Heart right ventricle (tissue), 16 donors: ENCODE measurements at regions of chr4 and their contacts with region 1.

Region 1: GRCh38 chr4:139279760-139280620 is at the start of gene MGARP:
- DNase-seq: peak in 1 of 2 donors; percentile 29
- ATAC-seq: peak; percentile 50 to 85 (median 76)
- H3K4me3 ChIP-seq: peak within 1 kb of the TSS; percentile 29 to 62 (median 57)
- H3K27ac ChIP-seq: peak within 1 kb of the TSS in 3 of 10 donors; percentile 6 to 18 (median 15)
- H3K4me1 ChIP-seq: peaks cover 0 to 21% (median 14%) of the 10 kb centered on the region in 9 donors
- H3K27me3 ChIP-seq: peaks cover 0 to 62% (median 25%) of the 10 kb centered on the region in 7 donors
- CTCF ChIP-seq: no peak
- total RNA-seq, gene MGARP: 0.36 to 2.3 (median 1.1) TPM in 9 of 10 donors, not detected in the other

Region 2: GRCh38 chr4:139108567-139109128 is 171.3 kb before region 1 on chr4:
- intact Hi-C with region 1: loop called in 2 of 10 experiments (anchors 10 kb)
- DNase-seq: no peak
- ATAC-seq: no peak
- H3K4me3 ChIP-seq: no peak overlapping the region
- H3K27ac ChIP-seq: no peak overlapping the region
- H3K4me1 ChIP-seq: no peaks in the 10 kb centered on the region
- H3K27me3 ChIP-seq: no peaks in the 10 kb centered on the region
- CTCF ChIP-seq: no peak

Region 3: GRCh38 chr4:139126898-139127297 is 153.1 kb before region 1 on chr4:
- intact Hi-C with region 1: no loop called
- DNase-seq: no peak
- ATAC-seq: no peak
- H3K4me3 ChIP-seq: no peak overlapping the region
- H3K27ac ChIP-seq: no peak overlapping the region
- H3K4me1 ChIP-seq: no peaks in the 10 kb centered on the region
- H3K27me3 ChIP-seq: no peaks in the 10 kb centered on the region
- CTCF ChIP-seq: no peak

Region 4: GRCh38 chr4:139184129-139184528 is 95.9 kb before region 1 on chr4:
- intact Hi-C with region 1: loop called in 1 of 10 experiments (anchors 10 kb)
- DNase-seq: no peak
- ATAC-seq: peak in 6 of 8 donors; percentile 52 to 61 (median 56)
- H3K4me3 ChIP-seq: no peak overlapping the region
- H3K27ac ChIP-seq: no peak overlapping the region
- H3K4me1 ChIP-seq: peaks cover 0 to 15% (median 0%) of the 10 kb centered on the region in 9 donors
- H3K27me3 ChIP-seq: no peaks in the 10 kb centered on the region
- CTCF ChIP-seq: peak in 6 of 9 donors; percentile 22 to 54 (median 38)

Region 5: DNA sequence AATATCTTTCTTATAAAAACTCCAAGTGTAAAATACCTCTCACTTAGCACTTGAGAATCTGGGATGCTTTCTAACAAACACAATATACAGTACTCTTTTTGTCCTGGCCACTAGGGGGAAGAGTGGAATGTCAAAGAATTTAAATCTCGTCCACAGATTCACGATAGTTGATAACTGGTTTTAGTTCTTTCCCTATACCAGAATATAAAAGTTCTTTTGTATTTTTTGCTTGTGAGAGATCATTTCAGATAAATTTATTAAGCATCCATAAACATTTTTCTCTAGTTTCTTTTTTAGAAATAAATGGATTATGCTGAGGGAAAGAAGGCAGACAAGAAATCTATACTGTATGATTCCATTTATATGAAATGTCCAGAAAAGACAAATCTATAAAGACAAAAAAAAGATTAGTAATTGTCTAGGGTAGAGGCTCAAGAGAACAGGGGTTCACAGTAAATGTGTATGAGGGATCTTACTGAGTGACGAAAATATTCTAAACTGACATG is 50.4 kb before region 1 on chr4:
- intact Hi-C with region 1: loop called in 1 of 10 experiments (anchors 10 kb)
- DNase-seq: peak in 1 of 2 donors; percentile 12
- ATAC-seq: peak in 5 of 8 donors; percentile 52 to 71 (median 62)
- H3K4me3 ChIP-seq: no peak overlapping the region
- H3K27ac ChIP-seq: no peak overlapping the region
- H3K4me1 ChIP-seq: no peaks in the 10 kb centered on the region
- H3K27me3 ChIP-seq: no peaks in the 10 kb centered on the region
- CTCF ChIP-seq: peak; percentile 39 to 80 (median 72)

Region 6: DNA sequence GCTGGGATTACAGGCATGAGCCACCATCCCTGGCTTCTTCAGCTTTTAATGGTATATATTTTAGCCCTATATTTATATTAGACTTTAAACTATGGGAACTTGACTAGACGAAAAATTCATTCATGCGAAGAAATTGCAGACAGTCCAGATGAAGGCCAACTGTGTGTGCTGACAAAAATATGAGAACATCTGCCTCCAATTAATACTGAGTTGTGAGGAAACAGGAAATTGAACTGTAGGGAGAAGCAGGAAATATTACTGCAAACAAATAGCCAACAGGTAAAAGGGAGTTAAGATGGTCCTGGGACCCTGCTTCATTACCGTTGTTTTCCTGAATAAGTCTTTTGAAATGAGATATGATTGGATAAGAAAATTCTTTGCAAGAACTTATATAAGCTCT is 26.3 kb before region 1 on chr4:
- intact Hi-C with region 1: no loop called
- DNase-seq: no peak
- ATAC-seq: no peak
- H3K4me3 ChIP-seq: no peak overlapping the region
- H3K27ac ChIP-seq: no peak overlapping the region
- H3K4me1 ChIP-seq: no peaks in the 10 kb centered on the region
- H3K27me3 ChIP-seq: no peaks in the 10 kb centered on the region
- CTCF ChIP-seq: no peak